HepG2 (cell line): ENCODE measurements at regions of chr15 and their contacts with region 1.

Region 1: GRCh38 chr15:58475573-58476524 is 44.1 kb downstream of the LIPC start:
- DNase-seq: peak; percentile 94
- ATAC-seq: peak; percentile 85
- H3K4me3 ChIP-seq: peak overlapping the region in 2 of 3 experiments; percentile 2 to 49; a peak in 1 of 6 replicates
- H3K27ac ChIP-seq: peak overlapping the region; percentile 70
- H3K4me1 ChIP-seq: peaks cover 84% of the 10 kb centered on the region
- H3K27me3 ChIP-seq: no peaks in the 10 kb centered on the region
- CTCF ChIP-seq: no peak
- EP300 ChIP-seq: peak; percentile 57 to 63; a peak in 2 of 4 replicates
- POLR2A ChIP-seq: no peak
- RAD21 ChIP-seq: no peak

Region 2: GRCh38 chr15:58282060-58282708 is 193.7 kb before region 1 on chr15:
- CTCF ChIA-PET with region 1: no interaction called
- POLR2A ChIA-PET with region 1: interaction called, 10 read pairs
- in situ Hi-C with region 1: no loop called
- intact Hi-C with region 1: no loop called
- DNase-seq: peak; percentile 58
- ATAC-seq: peak; percentile 30
- H3K4me3 ChIP-seq: no peak overlapping the region
- H3K27ac ChIP-seq: peak overlapping the region; percentile 78
- H3K4me1 ChIP-seq: peaks cover 56% of the 10 kb centered on the region
- H3K27me3 ChIP-seq: no peaks in the 10 kb centered on the region
- CTCF ChIP-seq: peak; percentile 38
- EP300 ChIP-seq: peak in 1 of 2 experiments; percentile 83; a peak in 2 of 4 replicates
- POLR2A ChIP-seq: no peak
- RAD21 ChIP-seq: no peak

Region 3: DNA sequence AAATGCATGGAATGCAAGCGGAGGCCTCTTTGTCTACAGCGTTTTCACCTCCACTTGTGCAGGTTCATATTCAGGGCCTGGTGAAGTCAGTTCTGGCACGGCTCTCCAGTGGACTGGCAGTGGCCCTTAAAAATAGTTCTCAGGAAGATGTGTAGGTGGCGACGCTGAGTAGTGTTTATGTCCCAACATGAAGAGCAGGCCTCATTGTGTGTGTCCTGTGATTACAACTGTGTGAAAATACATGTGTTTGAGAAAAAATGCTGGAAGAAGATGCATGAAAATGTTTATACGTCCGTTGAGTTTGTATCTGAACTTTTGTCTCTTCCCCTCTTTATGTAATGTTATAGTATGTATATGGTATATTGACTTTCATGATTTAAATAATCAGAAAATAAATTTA is 36.9 kb before region 1 on chr15:
- CTCF ChIA-PET with region 1: no interaction called
- POLR2A ChIA-PET with region 1: interaction called, 5 read pairs
- in situ Hi-C with region 1: loop called (anchors 5 kb)
- intact Hi-C with region 1: loop called (anchors 5 kb)
- DNase-seq: peak; percentile 77
- ATAC-seq: peak; percentile 89
- H3K4me3 ChIP-seq: no peak overlapping the region
- H3K27ac ChIP-seq: no peak overlapping the region
- H3K4me1 ChIP-seq: peaks cover 75% of the 10 kb centered on the region
- H3K27me3 ChIP-seq: no peaks in the 10 kb centered on the region
- CTCF ChIP-seq: peak; percentile 67
- EP300 ChIP-seq: no peak
- POLR2A ChIP-seq: no peak
- RAD21 ChIP-seq: peak; percentile 68

Region 4: DNA sequence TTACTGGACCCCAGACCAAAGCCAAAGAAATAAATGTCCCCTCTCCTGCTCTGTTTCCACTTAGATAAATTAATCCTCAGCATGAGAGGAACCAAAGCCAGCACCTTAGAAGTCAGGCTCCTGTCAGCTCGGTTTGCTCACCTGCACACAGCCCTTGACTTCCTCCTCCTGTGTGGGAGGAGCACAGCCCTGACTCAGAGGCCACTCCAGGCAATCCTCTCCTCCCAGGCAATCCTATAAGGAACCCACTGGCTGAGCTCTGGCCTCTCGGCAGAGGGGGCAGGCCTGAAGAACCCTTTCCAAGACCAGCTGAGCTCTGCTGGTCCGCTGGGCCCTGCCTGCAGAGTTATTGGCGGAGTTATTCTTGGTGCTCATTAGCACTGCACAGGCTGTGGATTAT is 13.3 kb before region 1 on chr15:
- CTCF ChIA-PET with region 1: no interaction called
- POLR2A ChIA-PET with region 1: interaction called, 93 read pairs
- in situ Hi-C with region 1: no loop called
- intact Hi-C with region 1: no loop called
- DNase-seq: no peak
- ATAC-seq: peak; percentile 9; the same call in 1 of the 3 replicates
- H3K4me3 ChIP-seq: no peak overlapping the region
- H3K27ac ChIP-seq: no peak overlapping the region
- H3K4me1 ChIP-seq: peaks cover 94% of the 10 kb centered on the region
- H3K27me3 ChIP-seq: no peaks in the 10 kb centered on the region
- CTCF ChIP-seq: no peak
- EP300 ChIP-seq: no peak
- POLR2A ChIP-seq: no peak
- RAD21 ChIP-seq: no peak

Region 5: DNA sequence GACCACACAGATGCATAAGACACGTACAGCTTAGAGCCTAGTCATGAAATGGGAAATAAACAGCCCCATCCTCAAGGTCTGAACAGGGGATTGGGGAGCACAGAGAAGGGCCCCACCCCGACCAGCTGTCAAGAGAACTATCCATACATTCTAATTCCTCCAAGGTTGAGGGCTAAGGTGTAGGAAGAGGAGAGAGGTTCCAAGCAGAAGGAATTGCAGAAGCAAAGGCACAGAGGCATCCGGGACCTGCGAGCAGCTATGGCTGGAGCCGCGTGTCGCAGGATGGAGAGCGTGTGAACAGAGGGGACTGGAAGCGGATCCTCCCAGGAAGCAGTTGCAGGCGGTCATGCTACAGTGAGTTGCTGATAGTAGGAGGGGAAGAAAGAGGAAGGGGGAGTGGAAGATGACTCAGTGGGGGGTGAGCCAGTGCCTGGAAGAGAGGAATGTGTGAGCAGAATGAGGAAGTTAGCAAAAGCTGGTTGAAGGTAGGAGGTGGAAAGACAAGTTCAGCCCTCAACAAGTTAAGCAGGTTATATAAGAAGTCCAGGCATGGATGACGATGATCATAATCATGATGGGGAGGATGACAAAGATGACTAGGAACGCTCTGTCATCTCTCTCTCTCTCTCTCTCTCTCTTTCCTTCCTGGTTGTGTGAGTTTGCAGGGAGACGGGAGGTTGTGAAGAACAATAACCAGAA is 45.6 kb after region 1 on chr15:
- CTCF ChIA-PET with region 1: no interaction called
- POLR2A ChIA-PET with region 1: interaction called, 3 read pairs
- in situ Hi-C with region 1: loop called (anchors 10 kb)
- intact Hi-C with region 1: no loop called
- DNase-seq: peak; percentile 42
- ATAC-seq: no peak; the same call in 2 of the 3 replicates
- H3K4me3 ChIP-seq: no peak overlapping the region
- H3K27ac ChIP-seq: no peak overlapping the region
- H3K4me1 ChIP-seq: peaks cover 29% of the 10 kb centered on the region
- H3K27me3 ChIP-seq: no peaks in the 10 kb centered on the region
- CTCF ChIP-seq: no peak
- EP300 ChIP-seq: no peak
- POLR2A ChIP-seq: no peak
- RAD21 ChIP-seq: no peak

Region 6: GRCh38 chr15:58611731-58612676 is 136.2 kb after region 1 on chr15:
- CTCF ChIA-PET with region 1: no interaction called
- POLR2A ChIA-PET with region 1: no interaction called
- in situ Hi-C with region 1: no loop called
- intact Hi-C with region 1: no loop called
- DNase-seq: no peak
- ATAC-seq: peak; percentile 57
- H3K4me3 ChIP-seq: no peak overlapping the region
- H3K27ac ChIP-seq: no peak overlapping the region
- H3K4me1 ChIP-seq: no peaks in the 10 kb centered on the region
- H3K27me3 ChIP-seq: no peaks in the 10 kb centered on the region
- CTCF ChIP-seq: no peak
- EP300 ChIP-seq: no peak
- POLR2A ChIP-seq: no peak
- RAD21 ChIP-seq: no peak

Region 7: GRCh38 chr15:58749532-58750337 is 273.9 kb after region 1 on chr15 and contains the start of gene ADAM10:
- CTCF ChIA-PET with region 1: no interaction called
- POLR2A ChIA-PET with region 1: interaction called, 13 read pairs
- in situ Hi-C with region 1: no loop called
- intact Hi-C with region 1: no loop called
- DNase-seq: peak; percentile 95
- ATAC-seq: peak; percentile 96
- H3K4me3 ChIP-seq: peak within 1 kb of the TSS; percentile 91 to 99 (median 95)
- H3K27ac ChIP-seq: peak within 1 kb of the TSS; percentile 97
- H3K4me1 ChIP-seq: peaks cover 32% of the 10 kb centered on the region
- H3K27me3 ChIP-seq: no peaks in the 10 kb centered on the region; a peak in 1 of 5 replicates
- CTCF ChIP-seq: peak; percentile 21; the same call in 1 of the 2 replicates
- EP300 ChIP-seq: no peak
- POLR2A ChIP-seq: peak; percentile 66 to 83
- RAD21 ChIP-seq: no peak
- total RNA-seq, gene ADAM10: 86.8 and 125 TPM in 2 replicates